CD4-positive, alpha-beta memory T cell (primary cell): ENCODE measurements at regions of chr5 and their contacts with region 1.

Region 1: GRCh38 chr5:154467655-154468354 is 10.2 kb downstream of the HAND1 start:
- DNase-seq: peak; percentile 51 to 62 (median 52)
- H3K4me3 ChIP-seq: no peak overlapping the region
- H3K4me3 Mint-ChIP-seq: no peak overlapping the region
- H3K27ac ChIP-seq: no peak overlapping the region
- H3K27ac Mint-ChIP-seq: no peak overlapping the region
- H3K4me1 ChIP-seq: peaks cover 12% of the 10 kb centered on the region
- H3K4me1 Mint-ChIP-seq: peaks cover 0 to 15% (median 10%) of the 10 kb centered on the region in 4 donors
- H3K27me3 ChIP-seq: peaks cover 18% of the 10 kb centered on the region
- H3K27me3 Mint-ChIP-seq: peaks cover 26 to 38% of the 10 kb centered on the region in 2 donors

Region 2: GRCh38 chr5:153974131-153974812 is 493.5 kb before region 1 on chr5:
- CTCF ChIA-PET with region 1: interaction called, 3 read pairs
- POLR2A ChIA-PET with region 1: no interaction called
- intact Hi-C with region 1: loop called (anchors 1 kb)
- DNase-seq: peak; percentile 28 to 41 (median 39)
- H3K4me3 ChIP-seq: no peak overlapping the region
- H3K4me3 Mint-ChIP-seq: no peak overlapping the region
- H3K27ac ChIP-seq: no peak overlapping the region
- H3K27ac Mint-ChIP-seq: no peak overlapping the region
- H3K4me1 ChIP-seq: no peaks in the 10 kb centered on the region
- H3K4me1 Mint-ChIP-seq: no peaks in the 10 kb centered on the region
- H3K27me3 ChIP-seq: no peaks in the 10 kb centered on the region
- H3K27me3 Mint-ChIP-seq: peaks cover 3 to 4% of the 10 kb centered on the region in 2 donors

Region 3: DNA sequence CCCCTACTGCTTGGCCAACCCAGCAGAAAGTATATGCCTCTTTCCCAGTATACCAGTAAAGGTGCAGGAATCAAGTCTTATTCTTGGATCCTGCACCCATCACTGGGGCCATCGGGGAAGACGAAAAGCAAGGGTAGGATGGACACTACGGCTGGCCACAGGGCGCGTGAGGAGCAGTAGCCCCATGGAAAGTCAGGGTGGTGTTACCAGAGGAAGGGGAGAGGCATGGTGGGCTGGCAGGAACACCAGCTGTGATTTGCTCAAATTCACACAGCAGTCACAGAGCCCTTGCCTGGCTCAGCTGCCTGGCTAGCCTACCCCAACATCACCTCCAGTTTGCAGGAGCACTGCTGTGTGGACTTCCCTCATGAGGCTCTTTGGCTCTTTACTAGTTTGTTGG is 56.5 kb before region 1 on chr5:
- CTCF ChIA-PET with region 1: no interaction called
- POLR2A ChIA-PET with region 1: no interaction called
- intact Hi-C with region 1: no loop called
- DNase-seq: no peak
- H3K4me3 ChIP-seq: no peak overlapping the region
- H3K4me3 Mint-ChIP-seq: no peak overlapping the region
- H3K27ac ChIP-seq: no peak overlapping the region
- H3K27ac Mint-ChIP-seq: peak overlapping the region in 2 of 7 donors; percentile 9 to 86
- H3K4me1 ChIP-seq: no peaks in the 10 kb centered on the region
- H3K4me1 Mint-ChIP-seq: peaks cover 0 to 1% (median 0%) of the 10 kb centered on the region in 4 donors
- H3K27me3 ChIP-seq: no peaks in the 10 kb centered on the region
- H3K27me3 Mint-ChIP-seq: no peaks in the 10 kb centered on the region

Region 4: GRCh38 chr5:154421868-154422267 is 45.9 kb before region 1 on chr5:
- CTCF ChIA-PET with region 1: interaction called, 13 read pairs
- POLR2A ChIA-PET with region 1: no interaction called
- intact Hi-C with region 1: no loop called
- DNase-seq: no peak
- H3K4me3 ChIP-seq: no peak overlapping the region
- H3K4me3 Mint-ChIP-seq: no peak overlapping the region
- H3K27ac ChIP-seq: no peak overlapping the region
- H3K27ac Mint-ChIP-seq: peak overlapping the region in 3 of 7 donors; percentile 5 to 66 (median 43)
- H3K4me1 ChIP-seq: no peaks in the 10 kb centered on the region
- H3K4me1 Mint-ChIP-seq: peaks cover 7 to 9% (median 8%) of the 10 kb centered on the region in 4 donors
- H3K27me3 ChIP-seq: no peaks in the 10 kb centered on the region
- H3K27me3 Mint-ChIP-seq: no peaks in the 10 kb centered on the region

Region 5: DNA sequence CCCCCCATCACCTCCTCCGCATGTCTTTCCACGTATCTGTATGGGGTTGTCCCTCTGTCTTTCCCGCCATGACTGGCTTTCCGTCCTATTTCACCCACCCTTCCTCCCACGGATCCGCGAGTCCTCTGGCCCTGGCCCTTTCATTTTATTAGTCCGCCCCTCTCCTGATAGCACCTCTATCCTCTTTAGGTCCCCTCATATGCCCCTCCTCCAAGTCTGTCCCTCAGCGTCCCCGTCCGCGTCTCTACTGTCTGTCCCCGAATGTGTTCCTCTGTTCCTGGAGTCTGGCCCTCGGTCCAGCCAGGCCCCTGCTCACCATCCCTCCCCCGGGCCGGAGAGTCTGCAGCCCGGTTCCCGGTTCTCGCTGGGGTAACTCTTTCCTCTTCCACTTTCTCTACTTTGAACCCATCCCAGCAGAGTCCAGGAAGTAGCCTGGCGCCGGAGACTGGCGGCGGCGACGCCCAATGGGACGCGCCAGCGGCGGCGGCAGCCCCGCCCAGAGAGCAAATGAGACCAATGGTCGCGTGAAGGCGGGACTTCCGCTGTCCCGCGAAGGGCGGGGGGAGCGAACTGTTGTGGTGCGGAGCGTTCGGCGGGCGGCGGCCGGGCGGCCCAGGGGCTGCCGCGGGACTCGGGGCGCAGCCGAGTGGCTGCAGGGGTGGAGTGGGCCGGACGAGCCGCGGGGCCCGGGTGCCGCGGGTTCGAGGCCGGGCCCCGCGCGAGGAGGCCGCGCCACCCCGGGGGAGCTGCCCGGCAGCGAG is 22.2 kb before region 1 on chr5 and contains the start of gene SAP30L:
- CTCF ChIA-PET with region 1: interaction called, 12 read pairs
- POLR2A ChIA-PET with region 1: interaction called, 4 read pairs
- intact Hi-C with region 1: no loop called
- DNase-seq: peak; percentile 93 to 99 (median 96)
- H3K4me3 ChIP-seq: peak within 1 kb of the TSS; percentile 95 to 99
- H3K4me3 Mint-ChIP-seq: peak within 1 kb of the TSS; percentile 97 to 100 (median 99)
- H3K27ac ChIP-seq: peak within 1 kb of the TSS; percentile 66
- H3K27ac Mint-ChIP-seq: peak within 1 kb of the TSS; percentile 83 to 100 (median 96)
- H3K4me1 ChIP-seq: peaks cover 46% of the 10 kb centered on the region
- H3K4me1 Mint-ChIP-seq: peaks cover 40 to 75% (median 52%) of the 10 kb centered on the region in 4 donors
- H3K27me3 ChIP-seq: no peaks in the 10 kb centered on the region
- H3K27me3 Mint-ChIP-seq: no peaks in the 10 kb centered on the region
- total RNA-seq, gene SAP30L: 36.9 to 47.5 TPM

Region 6: GRCh38 chr5:154610321-154611154 is 142.7 kb after region 1 on chr5:
- CTCF ChIA-PET with region 1: interaction called, 3 read pairs
- POLR2A ChIA-PET with region 1: no interaction called
- intact Hi-C with region 1: loop called (anchors 5 kb)
- DNase-seq: peak in 4 of 5 donors; percentile 14 to 30 (median 18)
- H3K4me3 ChIP-seq: no peak overlapping the region
- H3K4me3 Mint-ChIP-seq: peak overlapping the region in 7 of 8 donors; percentile 15 to 72 (median 38)
- H3K27ac ChIP-seq: no peak overlapping the region
- H3K27ac Mint-ChIP-seq: no peak overlapping the region
- H3K4me1 ChIP-seq: peaks cover 8% of the 10 kb centered on the region
- H3K4me1 Mint-ChIP-seq: peaks cover 7 to 27% (median 9%) of the 10 kb centered on the region in 4 donors
- H3K27me3 ChIP-seq: peaks cover 9% of the 10 kb centered on the region
- H3K27me3 Mint-ChIP-seq: peaks cover 32 to 37% of the 10 kb centered on the region in 2 donors

Region 7: GRCh38 chr5:155004138-155004744 is 536.4 kb after region 1 on chr5:
- CTCF ChIA-PET with region 1: interaction called, 3 read pairs
- POLR2A ChIA-PET with region 1: no interaction called
- intact Hi-C with region 1: loop called (anchors 5 kb)
- DNase-seq: peak in 1 of 5 donors; percentile 0
- H3K4me3 ChIP-seq: no peak overlapping the region
- H3K4me3 Mint-ChIP-seq: no peak overlapping the region
- H3K27ac ChIP-seq: no peak overlapping the region
- H3K27ac Mint-ChIP-seq: no peak overlapping the region
- H3K4me1 ChIP-seq: no peaks in the 10 kb centered on the region
- H3K4me1 Mint-ChIP-seq: no peaks in the 10 kb centered on the region
- H3K27me3 ChIP-seq: no peaks in the 10 kb centered on the region
- H3K27me3 Mint-ChIP-seq: peaks cover 25 to 41% of the 10 kb centered on the region in 2 donors

Region 8: DNA sequence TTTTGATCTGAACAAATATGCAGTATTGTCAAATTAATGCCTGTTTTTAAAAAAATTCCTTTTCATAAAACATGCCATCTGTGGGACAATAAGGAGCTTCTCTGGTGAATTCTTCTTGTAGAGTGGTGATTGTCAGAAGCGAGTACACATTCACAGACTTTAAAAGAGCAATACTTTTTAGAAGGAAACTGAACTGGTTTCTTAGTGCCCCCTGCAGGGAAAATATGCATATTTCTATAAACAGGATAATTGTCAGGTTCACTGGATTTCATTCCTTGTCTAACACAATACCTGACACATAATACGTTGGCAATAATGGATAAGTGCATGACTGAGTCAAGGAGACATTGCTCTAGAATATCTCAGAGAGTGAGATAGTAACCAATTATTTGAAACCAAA is 679.4 kb after region 1 on chr5:
- CTCF ChIA-PET with region 1: no interaction called
- POLR2A ChIA-PET with region 1: no interaction called
- intact Hi-C with region 1: loop called (anchors 10 kb)
- DNase-seq: no peak
- H3K4me3 ChIP-seq: no peak overlapping the region
- H3K4me3 Mint-ChIP-seq: no peak overlapping the region
- H3K27ac ChIP-seq: no peak overlapping the region
- H3K27ac Mint-ChIP-seq: no peak overlapping the region
- H3K4me1 ChIP-seq: no peaks in the 10 kb centered on the region
- H3K4me1 Mint-ChIP-seq: peaks cover 0 to 8% (median under 1%) of the 10 kb centered on the region in 4 donors
- H3K27me3 ChIP-seq: no peaks in the 10 kb centered on the region
- H3K27me3 Mint-ChIP-seq: peaks cover 0 to 8% of the 10 kb centered on the region in 2 donors